ENCODE measurements at regions of chr10 and their contacts with region 1.

Region 1: DNA sequence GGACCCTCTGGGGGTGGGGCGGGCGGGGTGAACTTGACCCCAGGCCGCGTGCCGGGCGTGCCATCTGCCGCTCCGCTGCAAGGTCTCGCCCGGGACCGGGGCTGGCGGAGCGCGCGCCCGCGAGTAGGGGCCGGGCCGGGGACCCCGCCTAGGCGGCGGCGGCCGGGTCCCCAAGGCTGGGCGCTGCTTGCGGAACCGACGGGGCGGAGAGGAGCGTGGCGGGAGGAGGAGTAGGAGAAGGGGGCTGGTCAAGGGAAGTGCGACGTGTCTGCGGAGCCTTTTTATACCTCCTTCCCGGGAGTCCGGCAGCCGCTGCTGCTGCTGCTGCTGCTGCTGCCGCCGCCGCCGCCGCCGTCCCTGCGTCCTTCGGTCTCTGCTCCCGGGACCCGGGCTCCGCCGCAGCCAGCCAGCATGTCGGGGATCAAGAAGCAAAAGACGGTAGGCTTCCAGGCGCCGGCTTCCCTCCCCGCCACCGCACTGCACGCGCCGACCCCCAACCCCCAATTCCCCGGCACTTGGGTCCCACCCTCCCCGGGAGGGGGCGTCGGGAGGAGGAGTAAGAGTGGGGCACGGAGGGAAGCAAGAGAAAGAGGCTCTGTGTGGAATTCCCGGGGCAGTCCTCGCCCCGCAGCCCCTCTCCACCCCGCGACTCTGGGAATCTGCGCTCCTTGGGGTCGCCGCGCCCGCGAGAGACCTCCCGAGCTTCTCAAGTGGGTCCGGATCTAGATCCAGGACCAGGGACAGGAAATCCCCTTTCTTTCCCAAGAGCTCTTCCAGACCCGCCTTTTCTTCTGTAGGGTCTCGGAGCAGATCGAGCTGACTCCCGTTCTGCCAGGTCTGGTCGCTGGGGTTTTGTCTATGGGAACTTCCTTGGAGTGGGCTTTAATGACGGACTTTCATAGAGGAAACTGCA is at the start of gene PAPSS2:
- H3K4me3 Mint-ChIP-seq: peak within 1 kb of the TSS; percentile 94
- H3K27ac Mint-ChIP-seq: peak within 1 kb of the TSS; percentile 90
- H3K4me1 Mint-ChIP-seq: peaks cover 52% of the 10 kb centered on the region
- H3K27me3 Mint-ChIP-seq: peaks cover 12% of the 10 kb centered on the region

Region 2: DNA sequence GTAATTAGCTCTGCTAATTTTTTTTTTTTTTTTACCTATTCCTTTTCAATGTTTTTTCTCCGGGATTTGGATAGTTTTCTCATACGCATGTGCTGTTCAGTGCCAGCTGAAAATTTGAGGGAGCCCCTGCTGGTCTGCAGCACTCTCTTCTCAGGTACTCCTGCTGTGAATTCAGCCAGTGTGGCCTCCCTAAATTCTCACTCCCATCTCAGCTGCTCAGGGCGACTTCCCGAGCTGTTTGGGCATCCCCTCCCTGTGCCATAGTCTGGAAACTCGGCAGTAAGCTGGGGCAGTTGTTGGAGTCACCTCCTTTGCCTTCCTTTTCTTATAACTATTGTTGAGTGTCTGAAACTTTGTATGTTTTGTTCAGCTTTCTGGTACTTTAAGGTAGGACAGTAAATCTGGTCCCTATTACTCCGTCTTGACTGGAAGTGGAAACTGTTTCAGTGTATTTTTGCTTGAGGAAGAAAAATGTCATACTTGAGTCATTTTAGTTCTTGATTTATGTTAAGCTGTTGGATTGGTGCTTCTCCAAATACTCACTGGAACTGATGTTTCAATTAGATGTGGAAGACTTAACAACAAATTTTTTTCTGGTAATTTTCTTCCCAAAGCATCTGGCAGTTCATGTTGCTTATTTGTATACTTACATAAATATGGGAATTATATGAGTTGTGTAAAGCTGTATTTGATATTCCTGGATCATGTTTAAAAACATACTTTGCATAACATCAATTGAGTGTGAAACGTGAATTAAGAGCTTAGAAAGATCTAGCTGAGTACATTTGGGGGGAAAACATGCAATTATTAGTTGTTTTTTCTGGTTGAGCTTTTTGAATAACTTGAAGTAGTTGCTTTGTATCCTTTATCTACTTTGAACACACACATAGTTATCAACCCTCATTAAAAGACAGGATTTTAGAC is 121.5 kb before region 1 on chr10:
- intact Hi-C with region 1: loop called (anchors 5 kb)
- H3K4me3 Mint-ChIP-seq: no peak overlapping the region
- H3K27ac Mint-ChIP-seq: peak overlapping the region; percentile 16
- H3K4me1 Mint-ChIP-seq: peaks cover 20% of the 10 kb centered on the region
- H3K27me3 Mint-ChIP-seq: no peaks in the 10 kb centered on the region

Region 3: GRCh38 chr10:87622314-87623004 is 37.4 kb before region 1 on chr10:
- intact Hi-C with region 1: no loop called
- H3K4me3 Mint-ChIP-seq: no peak overlapping the region
- H3K27ac Mint-ChIP-seq: no peak overlapping the region
- H3K4me1 Mint-ChIP-seq: peaks cover 9% of the 10 kb centered on the region
- H3K27me3 Mint-ChIP-seq: peaks cover 4% of the 10 kb centered on the region

Region 4: DNA sequence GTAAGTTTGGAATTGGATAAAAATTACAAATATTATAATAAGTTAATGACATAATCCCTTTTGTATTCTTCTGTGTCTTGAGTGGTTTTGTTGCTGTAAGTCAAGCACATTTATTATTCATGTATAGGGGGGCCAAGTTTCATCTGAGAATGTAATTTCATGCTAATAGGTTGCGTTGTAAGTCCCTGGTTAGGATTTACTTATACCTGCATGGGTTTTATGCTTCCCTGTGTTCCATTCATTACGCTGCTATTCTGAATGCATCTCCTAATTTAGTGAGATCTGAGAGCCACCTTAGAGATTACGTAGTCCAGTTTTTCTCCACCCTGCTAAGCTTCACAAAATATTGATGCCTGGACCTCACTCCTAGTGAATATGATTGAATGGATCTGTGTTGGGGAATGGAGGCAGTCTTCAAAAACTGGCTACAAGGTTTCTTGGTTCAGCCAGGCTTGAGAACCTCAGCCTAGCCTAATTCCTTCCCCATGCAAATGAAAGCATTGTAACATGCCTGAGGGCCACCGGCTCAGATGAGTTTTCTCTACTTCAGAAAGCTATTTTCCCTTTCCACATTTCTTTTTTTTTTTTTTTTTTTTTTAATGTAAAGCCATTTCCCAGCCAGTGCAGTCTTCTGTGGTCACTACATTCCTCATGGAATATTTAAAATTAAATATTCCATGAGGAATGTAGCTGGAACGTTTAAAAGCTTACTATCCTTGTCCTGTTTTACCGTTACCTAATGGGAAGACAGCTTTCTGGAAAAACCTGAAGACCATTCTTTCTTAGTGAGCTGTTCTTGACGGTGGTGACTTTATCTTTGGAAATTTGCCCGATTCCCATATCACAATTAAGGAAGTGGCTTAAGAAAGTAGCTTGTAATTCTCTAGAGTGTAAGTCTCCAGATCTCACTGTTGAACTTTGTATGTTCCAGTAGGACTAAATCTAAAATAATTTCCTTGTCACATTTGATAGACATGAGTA is 15.9 kb after region 1 on chr10:
- intact Hi-C with region 1: no loop called
- H3K4me3 Mint-ChIP-seq: no peak overlapping the region
- H3K27ac Mint-ChIP-seq: no peak overlapping the region
- H3K4me1 Mint-ChIP-seq: peaks cover 5% of the 10 kb centered on the region
- H3K27me3 Mint-ChIP-seq: no peaks in the 10 kb centered on the region

Region 5: DNA sequence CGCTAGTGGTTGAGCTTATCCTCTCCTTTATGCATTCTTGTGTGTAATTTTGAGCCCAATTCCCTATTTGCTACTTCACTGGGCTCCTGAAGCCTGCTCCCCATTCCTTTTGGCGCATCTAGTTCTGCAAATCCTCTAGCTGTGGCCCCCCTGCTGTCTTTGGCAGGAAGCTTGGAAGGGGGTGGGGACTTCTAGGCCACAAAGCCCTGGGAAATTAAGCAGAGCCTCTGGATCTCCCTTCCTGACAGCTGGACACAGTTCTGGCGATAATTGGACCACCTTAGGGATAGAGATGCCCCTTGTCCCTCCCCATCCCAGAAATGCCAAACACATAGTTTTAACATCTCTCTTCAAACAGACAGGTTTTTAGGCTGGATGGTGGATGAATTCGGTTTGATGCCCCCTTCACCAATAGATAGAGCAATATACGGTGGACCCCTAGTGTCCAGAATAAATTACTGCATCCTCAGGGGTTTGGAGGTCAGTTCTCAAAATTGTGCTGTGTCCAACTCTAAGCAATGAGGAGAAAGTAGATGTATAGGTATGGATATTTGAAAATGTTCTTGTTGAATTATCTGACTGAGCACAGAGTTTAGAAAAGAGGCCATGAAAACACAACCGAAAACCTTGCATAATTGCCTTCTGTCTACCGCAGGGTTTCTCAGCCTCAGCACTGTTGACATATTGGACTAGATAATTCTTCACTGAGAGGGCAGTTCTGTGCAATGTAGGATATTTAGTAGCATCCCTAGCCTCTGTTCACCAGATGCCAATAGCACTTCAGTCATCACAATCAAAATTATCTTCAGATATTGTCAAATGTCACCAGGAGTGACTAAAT is 75.4 kb after region 1 on chr10:
- intact Hi-C with region 1: loop called (anchors 1 kb)
- H3K4me3 Mint-ChIP-seq: no peak overlapping the region
- H3K27ac Mint-ChIP-seq: peak overlapping the region; percentile 47
- H3K4me1 Mint-ChIP-seq: peaks cover 18% of the 10 kb centered on the region
- H3K27me3 Mint-ChIP-seq: no peaks in the 10 kb centered on the region

Region 6: GRCh38 chr10:87771871-87772500 is 112.2 kb after region 1 on chr10:
- intact Hi-C with region 1: loop called (anchors 1 kb)
- H3K4me3 Mint-ChIP-seq: no peak overlapping the region
- H3K27ac Mint-ChIP-seq: no peak overlapping the region
- H3K4me1 Mint-ChIP-seq: peaks cover 12% of the 10 kb centered on the region
- H3K27me3 Mint-ChIP-seq: no peaks in the 10 kb centered on the region

Measured in dendritic cell treated with granulocyte-macrophage colony-stimulating factor and Interleukin-4, amounts not matched to agents 40 ng/mL and 50 ng/mL, for 4 days (primary cell).